ENCODE measurements at regions of chr16 and their contacts with region 1.

Region 1: DNA sequence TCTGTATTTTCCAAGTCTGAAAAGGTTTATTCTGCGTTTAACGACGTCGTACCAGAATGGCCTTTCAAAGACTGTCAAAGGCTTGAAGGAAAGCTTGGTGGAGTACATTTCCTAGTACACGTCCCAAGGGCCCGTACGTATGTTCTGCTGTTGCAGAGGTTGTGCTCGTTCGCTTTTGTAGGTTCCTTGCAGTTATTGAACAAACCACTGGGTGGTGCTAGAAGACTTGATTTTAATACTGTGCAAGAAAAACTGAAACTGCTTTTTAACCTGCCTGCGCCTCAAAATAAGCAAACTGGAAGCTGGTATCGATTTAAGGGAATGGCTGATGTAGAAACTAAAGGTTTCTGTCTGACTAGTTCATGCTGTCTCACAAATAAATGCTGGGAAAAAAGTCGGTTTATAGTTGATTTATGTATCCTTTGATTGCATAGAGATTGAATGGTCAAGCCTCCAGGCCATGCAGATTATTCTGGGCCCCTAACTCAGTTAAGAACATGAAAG is 54.6 kb downstream of the USP10 start:
- ATAC-seq: peak; percentile 78 to 93 (median 88)
- H3K4me3 ChIP-seq: no peak overlapping the region
- H3K27ac ChIP-seq: no peak overlapping the region
- H3K4me1 ChIP-seq: peaks cover 13 to 17% of the 10 kb centered on the region in 2 donors

Region 2: GRCh38 chr16:83887081-83887480 is 867.3 kb before region 1 on chr16:
- in situ Hi-C with region 1: no loop called
- ATAC-seq: peak in 3 of 8 experiments; percentile 21 to 39 (median 25)
- H3K4me3 ChIP-seq: no peak overlapping the region
- H3K27ac ChIP-seq: no peak overlapping the region
- H3K4me1 ChIP-seq: peaks cover 4 to 10% of the 10 kb centered on the region in 2 donors

Region 3: DNA sequence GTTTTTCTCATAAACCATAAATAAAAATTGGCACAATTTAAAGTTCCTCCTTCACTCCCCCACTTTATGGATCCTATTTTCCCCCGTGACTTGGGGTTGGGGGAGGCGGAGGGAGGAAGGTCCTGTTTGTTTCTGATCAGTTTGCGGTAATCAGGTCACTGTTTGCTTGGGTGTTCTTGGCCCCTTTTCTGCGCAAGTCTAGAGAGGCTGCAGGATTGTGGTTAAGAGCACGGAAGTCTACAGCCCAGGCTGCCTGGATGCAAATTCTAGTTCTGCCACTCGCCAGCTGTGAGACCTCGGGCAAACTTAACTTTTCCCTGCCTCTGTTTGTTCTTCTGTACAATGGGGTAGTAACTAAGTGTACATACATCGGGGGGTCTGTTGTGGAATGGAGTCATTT is 374.0 kb before region 1 on chr16:
- in situ Hi-C with region 1: no loop called
- ATAC-seq: no peak
- H3K4me3 ChIP-seq: no peak overlapping the region
- H3K27ac ChIP-seq: no peak overlapping the region
- H3K4me1 ChIP-seq: peaks cover 9 to 17% of the 10 kb centered on the region in 2 donors

Region 4: GRCh38 chr16:84544031-84544773 is 210.2 kb before region 1 on chr16:
- in situ Hi-C with region 1: no loop called
- ATAC-seq: peak in 5 of 8 experiments; percentile 2 to 69 (median 48)
- H3K4me3 ChIP-seq: no peak overlapping the region
- H3K27ac ChIP-seq: peak overlapping the region in 1 of 2 donors; percentile 36
- H3K4me1 ChIP-seq: peaks cover 48 to 57% of the 10 kb centered on the region in 2 donors

Region 5: GRCh38 chr16:84806256-84806889 is 52.0 kb after region 1 on chr16:
- in situ Hi-C with region 1: no loop called
- ATAC-seq: peak in 3 of 8 experiments; percentile 92 to 95 (median 92)
- H3K4me3 ChIP-seq: no peak overlapping the region
- H3K27ac ChIP-seq: no peak overlapping the region
- H3K4me1 ChIP-seq: no peaks in the 10 kb centered on the region

Region 6: DNA sequence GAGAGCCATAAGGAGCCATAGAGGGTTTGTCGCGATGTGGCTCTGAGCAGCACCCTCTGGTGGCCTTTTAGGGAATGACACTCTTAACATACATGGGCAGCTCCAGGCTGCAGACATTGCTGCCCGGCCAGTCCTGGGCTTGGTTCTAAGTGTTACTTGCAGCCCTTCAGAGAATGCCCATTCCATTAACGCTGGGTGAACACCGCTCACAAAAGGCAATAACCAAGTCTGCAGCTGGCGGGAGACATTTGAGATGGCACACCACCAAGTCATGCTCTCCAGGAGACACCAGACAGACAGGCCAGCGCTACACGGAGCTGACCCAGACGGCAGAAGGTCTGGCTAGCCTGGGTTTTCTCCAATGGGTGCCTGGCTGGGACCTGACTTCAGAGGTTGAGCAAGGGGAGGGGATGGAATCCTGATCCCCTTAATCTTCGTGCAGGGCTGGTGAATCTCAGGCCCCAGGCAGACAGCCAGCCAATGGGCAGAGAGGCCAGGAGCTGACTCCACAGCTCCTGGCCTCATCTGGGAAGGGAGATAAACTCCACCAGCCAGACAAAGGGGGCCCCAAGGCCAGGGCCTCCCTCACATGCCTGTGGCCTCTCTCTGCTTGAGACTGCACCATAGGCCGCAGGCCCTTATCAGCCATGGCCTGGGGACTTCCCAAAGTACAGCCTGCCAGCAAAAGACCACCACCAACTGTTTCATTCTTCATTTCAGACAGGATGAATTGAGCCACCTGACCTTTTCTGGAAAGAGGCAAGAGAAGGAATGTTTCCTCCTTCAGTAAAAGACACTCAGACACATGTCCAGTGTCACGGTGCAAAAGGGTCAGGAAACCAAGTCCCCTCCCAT is 198.2 kb after region 1 on chr16:
- in situ Hi-C with region 1: loop called in 6 of 9 experiments (anchors 25 kb)
- ATAC-seq: peak; percentile 86 to 99 (median 90)
- H3K4me3 ChIP-seq: no peak overlapping the region
- H3K27ac ChIP-seq: peak overlapping the region in 1 of 2 donors; percentile 48
- H3K4me1 ChIP-seq: peaks cover 11 to 14% of the 10 kb centered on the region in 2 donors

Region 7: DNA sequence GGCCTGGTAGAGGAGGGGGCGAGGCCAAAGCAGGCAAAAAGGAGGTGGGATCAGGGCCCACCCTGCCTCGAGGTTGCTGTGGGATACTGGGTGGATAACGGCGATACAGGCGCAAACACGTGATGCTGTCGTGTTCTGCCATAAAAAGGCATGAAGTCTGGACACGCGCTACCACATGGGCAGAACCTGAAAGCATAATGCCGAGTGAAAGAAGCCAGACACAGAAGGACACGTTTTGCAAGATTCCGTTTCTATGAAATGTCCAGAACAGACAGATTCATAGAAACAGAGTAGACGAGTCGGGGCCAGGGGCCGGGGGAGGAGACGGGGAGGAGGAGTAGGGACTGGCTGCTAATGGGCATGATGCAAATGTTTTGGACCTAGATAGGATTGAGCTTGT is 213.4 kb after region 1 on chr16:
- in situ Hi-C with region 1: loop called in 7 of 9 experiments (anchors 5 to 25 kb)
- ATAC-seq: no peak
- H3K4me3 ChIP-seq: no peak overlapping the region
- H3K27ac ChIP-seq: no peak overlapping the region
- H3K4me1 ChIP-seq: peaks cover 6% of the 10 kb centered on the region in 2 donors

Measured in motor neuron (in vitro differentiated cells).